IMR-90 (cell line): ENCODE measurements at regions of chr1 and their contacts with region 1.

Region 1: DNA sequence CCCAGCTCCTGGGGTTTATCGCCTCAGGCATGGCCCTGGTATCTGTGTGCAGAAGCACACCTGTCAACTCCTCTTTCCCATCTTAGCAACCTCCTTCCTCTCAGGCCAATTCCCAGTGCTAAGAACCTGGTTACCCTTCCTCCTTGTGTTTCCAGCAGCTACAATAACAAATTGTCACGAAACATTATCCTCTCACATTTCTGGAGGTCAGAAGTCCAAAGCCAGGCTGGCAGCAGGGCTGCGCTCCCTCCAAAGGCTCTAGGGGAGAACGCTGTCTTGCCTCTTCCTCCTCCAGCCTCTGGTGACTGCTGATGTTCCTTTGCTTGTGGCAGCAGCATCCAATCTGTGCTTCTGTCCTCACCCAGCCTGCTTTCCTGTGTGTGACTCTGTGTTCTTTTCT is 10.7 kb upstream of the MRPS14 start:
- DNase-seq: no peak
- ATAC-seq: no peak
- H3K4me3 ChIP-seq: no peak overlapping the region
- H3K27ac ChIP-seq: no peak overlapping the region
- H3K4me1 ChIP-seq: no peaks in the 10 kb centered on the region
- H3K27me3 ChIP-seq: peaks cover 6% of the 10 kb centered on the region
- CTCF ChIP-seq: no peak
- POLR2A ChIP-seq: no peak
- RAD21 ChIP-seq: no peak

Region 2: DNA sequence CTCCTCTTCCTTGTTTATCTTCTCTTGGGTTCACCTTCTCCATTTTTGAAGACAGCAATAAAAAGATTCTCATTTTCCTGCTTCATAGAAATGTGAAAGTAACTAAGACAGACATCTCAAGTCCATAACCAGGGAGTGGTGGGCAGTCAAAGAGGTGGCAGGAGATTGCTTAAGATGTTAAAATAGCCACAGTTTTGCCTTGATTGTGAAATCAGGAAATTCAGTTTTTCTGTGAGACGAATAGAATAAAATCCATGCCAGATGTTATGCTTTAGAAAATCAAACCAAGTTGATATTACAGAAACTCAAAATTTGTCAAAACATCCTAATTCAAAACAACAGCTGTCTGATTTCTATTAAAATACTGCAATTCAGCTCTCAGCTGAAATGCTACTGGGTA is 90.9 kb after region 1 on chr1:
- CTCF ChIA-PET with region 1: interaction called, 13 read pairs
- POLR2A ChIA-PET with region 1: no interaction called
- dilution Hi-C with region 1: no loop called
- in situ Hi-C with region 1: no loop called
- intact Hi-C with region 1: loop called (anchors 1 kb)
- DNase-seq: no peak
- ATAC-seq: no peak
- H3K4me3 ChIP-seq: no peak overlapping the region
- H3K27ac ChIP-seq: no peak overlapping the region
- H3K4me1 ChIP-seq: no peaks in the 10 kb centered on the region
- H3K27me3 ChIP-seq: no peaks in the 10 kb centered on the region
- CTCF ChIP-seq: no peak
- POLR2A ChIP-seq: no peak
- RAD21 ChIP-seq: no peak

Region 3: GRCh38 chr1:175146529-175147213 is 112.7 kb after region 1 on chr1:
- CTCF ChIA-PET with region 1: interaction called, 6 read pairs
- POLR2A ChIA-PET with region 1: no interaction called
- dilution Hi-C with region 1: no loop called
- in situ Hi-C with region 1: no loop called
- intact Hi-C with region 1: loop called (anchors 1 kb)
- DNase-seq: peak; percentile 28
- ATAC-seq: peak; percentile 98
- H3K4me3 ChIP-seq: no peak overlapping the region
- H3K27ac ChIP-seq: no peak overlapping the region
- H3K4me1 ChIP-seq: no peaks in the 10 kb centered on the region
- H3K27me3 ChIP-seq: peaks cover 5% of the 10 kb centered on the region; the same call in 1 of the 2 replicates
- CTCF ChIP-seq: peak; percentile 70
- POLR2A ChIP-seq: no peak
- RAD21 ChIP-seq: no peak; the same call in 1 of the 2 replicates

Region 4: DNA sequence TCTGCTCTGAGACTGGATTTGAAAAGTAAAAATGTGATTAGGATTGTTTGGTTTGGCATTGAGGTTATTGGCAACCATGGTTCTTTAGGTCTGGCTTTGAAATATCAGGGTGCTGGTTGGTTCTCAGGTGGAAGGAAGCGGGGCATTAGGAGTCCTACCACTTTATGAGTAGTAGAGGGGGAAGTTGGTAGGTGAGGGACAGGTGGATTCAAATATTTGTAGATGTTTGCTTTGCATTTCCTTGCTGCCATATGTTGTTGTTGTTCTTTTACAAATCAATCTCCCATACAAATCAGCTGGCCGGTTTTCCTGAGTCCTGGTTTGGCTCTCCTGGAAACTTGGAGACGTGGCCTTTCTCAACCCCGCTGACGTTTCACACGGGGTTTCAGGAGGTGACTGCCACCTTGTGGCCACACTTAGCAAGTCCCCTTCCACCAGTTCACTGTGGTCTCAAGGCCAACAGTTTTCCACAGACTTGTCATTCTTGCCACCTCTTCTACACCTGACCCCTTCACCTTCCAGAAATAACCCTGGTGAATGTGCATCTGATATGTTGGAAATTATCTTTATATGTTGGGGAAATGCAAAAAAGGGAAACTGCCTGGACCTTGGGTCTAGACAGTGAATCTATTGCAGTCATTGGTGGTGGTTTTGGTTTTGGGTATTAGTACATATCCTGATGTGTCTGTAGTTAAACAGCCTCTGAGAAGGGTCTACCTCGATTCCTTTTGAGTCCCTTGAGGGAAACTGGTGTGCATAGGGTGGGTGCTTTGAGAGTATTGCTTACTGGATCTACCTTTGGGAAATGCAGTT is 285.7 kb after region 1 on chr1:
- CTCF ChIA-PET with region 1: interaction called, 8 read pairs
- POLR2A ChIA-PET with region 1: no interaction called
- dilution Hi-C with region 1: no loop called
- in situ Hi-C with region 1: no loop called
- intact Hi-C with region 1: loop called (anchors 1 kb)
- DNase-seq: peak; percentile 60
- ATAC-seq: peak; percentile 62
- H3K4me3 ChIP-seq: no peak overlapping the region
- H3K27ac ChIP-seq: no peak overlapping the region
- H3K4me1 ChIP-seq: no peaks in the 10 kb centered on the region
- H3K27me3 ChIP-seq: no peaks in the 10 kb centered on the region
- CTCF ChIP-seq: peak; percentile 73
- POLR2A ChIP-seq: no peak
- RAD21 ChIP-seq: peak; percentile 69

Region 5: GRCh38 chr1:176880954-176881595 is 1847.1 kb after region 1 on chr1:
- CTCF ChIA-PET with region 1: no interaction called
- POLR2A ChIA-PET with region 1: no interaction called
- dilution Hi-C with region 1: no loop called
- in situ Hi-C with region 1: no loop called
- intact Hi-C with region 1: loop called (anchors 1 kb)
- DNase-seq: peak; percentile 62
- ATAC-seq: peak; percentile 98
- H3K4me3 ChIP-seq: no peak overlapping the region
- H3K27ac ChIP-seq: no peak overlapping the region
- H3K4me1 ChIP-seq: no peaks in the 10 kb centered on the region
- H3K27me3 ChIP-seq: no peaks in the 10 kb centered on the region
- CTCF ChIP-seq: peak; percentile 73
- POLR2A ChIP-seq: no peak
- RAD21 ChIP-seq: peak; percentile 73